ENCODE measurements at regions of chr10 and their contacts with region 1.

Region 1: DNA sequence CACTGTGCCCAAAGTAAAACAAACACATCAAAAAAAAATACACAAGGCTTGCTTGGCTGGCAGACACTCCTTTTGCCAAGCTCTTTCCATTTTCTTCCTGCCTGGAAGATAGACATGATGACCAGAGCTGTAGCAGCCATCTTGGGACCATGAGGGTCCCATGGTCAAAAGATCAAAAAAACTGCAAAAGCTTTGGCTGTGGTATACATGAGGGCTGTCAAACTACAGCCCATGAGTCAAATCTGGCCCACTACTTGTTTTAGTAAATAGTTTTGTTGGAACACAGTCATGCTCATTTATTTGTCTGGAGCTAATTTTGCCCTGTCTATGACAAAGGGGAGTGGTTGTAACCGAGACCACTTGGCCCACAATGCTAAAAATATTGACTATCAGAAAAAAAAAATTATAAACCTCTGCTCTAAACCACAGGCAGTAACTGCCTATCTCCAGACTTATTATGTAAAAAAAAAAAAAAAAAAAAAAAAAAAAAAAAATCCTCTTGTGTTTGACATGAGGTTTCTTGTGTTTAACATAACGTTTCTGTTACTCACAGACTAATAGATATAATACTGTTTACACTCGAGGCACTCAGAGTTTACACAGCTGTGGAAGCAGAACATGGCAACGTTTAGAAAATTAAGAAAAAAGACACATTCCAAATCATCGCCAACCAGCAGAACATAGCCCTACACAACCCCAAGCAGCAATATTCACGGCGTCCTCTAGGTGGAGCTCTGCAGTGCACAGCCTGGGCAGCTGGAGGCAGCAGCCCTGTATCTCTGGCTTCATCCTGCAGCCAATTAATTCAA is 36.9 kb downstream of the ASB13 start:
- DNase-seq: peak; percentile 96
- H3K4me3 Mint-ChIP-seq: peak overlapping the region; percentile 31
- H3K27ac Mint-ChIP-seq: peak overlapping the region; percentile 73
- H3K4me1 Mint-ChIP-seq: peaks cover 29% of the 10 kb centered on the region
- H3K27me3 Mint-ChIP-seq: no peaks in the 10 kb centered on the region

Region 2: DNA sequence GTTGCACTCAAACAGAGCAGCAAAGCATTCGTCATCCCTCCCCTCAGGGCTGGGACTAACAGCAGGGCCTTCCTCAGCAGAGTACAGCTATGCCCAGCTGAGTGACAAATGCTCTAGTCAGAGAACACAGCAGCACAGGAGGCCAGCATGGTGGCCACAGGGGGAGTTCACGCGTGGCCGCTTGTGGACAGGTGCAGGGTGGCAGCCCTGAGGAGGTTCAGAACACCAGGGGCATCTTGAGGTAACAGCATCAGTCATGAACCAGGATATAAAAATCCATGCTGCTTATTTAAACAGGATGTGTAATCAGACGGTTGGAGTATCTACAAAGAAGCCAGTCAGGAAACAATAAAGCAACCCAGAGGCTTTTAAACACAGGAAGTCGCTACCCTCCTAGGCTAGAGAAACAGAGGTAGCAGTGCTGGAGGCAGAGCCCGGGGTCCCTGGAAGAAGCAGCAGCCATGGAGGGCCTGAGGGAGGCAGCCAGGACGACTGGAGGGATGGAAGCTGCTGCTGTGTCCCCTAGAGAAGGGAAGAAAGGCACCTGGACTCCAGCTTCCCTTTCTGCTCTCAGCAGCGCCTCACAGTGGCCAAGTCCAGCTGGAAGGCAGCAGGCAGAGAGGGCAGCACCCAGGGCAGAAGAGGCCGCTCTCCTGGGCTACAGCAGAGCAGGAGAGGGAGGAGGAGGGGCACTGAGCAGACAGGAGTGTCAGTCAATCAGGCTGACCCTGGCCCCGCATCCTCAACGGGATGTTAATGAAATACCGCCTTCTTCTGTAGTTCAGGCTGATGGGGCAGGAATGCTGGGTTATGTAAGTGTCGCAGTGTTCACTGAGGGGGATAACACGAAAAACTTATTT is 335.6 kb before region 1 on chr10:
- CTCF ChIA-PET with region 1: no interaction called
- intact Hi-C with region 1: loop called (anchors 1 kb)
- DNase-seq: peak; percentile 92
- H3K4me3 Mint-ChIP-seq: peak overlapping the region; percentile 85
- H3K27ac Mint-ChIP-seq: peak overlapping the region; percentile 96
- H3K4me1 Mint-ChIP-seq: peaks cover 73% of the 10 kb centered on the region
- H3K27me3 Mint-ChIP-seq: no peaks in the 10 kb centered on the region

Region 3: DNA sequence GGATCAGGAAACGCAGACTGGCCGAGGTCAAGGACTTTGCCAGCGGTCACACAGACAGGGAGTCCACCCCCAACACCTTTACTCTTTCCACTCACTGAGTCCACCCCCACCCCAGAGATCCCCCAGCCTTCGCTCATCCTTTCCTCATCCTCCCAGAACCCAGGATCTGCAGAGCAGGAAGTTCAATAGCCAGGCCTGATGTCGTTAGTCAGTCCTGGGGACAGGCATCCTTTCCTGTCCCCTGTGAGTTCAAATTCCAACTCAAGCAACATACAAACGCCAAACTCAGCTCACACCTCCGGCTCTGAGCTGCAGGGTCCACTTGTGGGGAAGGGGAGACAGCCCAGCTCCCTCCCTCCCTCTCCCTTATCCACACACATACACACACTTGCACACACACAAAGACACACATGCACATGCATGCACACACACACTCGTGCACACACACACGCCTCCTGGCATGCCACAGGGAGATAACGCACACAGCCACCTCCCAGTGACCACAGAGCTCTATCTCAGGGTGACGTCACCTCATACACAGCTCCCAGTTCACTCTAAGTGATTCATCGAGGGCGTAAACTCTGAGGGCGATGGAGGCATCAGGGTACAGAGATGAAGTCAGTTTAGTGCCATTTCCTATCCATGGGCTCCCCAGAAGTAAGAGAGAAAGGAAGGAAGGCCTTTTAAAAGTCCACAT is 80.8 kb before region 1 on chr10:
- CTCF ChIA-PET with region 1: interaction called, 3 read pairs
- intact Hi-C with region 1: loop called (anchors 5 kb)
- DNase-seq: peak; percentile 78
- H3K4me3 Mint-ChIP-seq: no peak overlapping the region
- H3K27ac Mint-ChIP-seq: no peak overlapping the region
- H3K4me1 Mint-ChIP-seq: peaks cover 30% of the 10 kb centered on the region
- H3K27me3 Mint-ChIP-seq: no peaks in the 10 kb centered on the region

Region 4: DNA sequence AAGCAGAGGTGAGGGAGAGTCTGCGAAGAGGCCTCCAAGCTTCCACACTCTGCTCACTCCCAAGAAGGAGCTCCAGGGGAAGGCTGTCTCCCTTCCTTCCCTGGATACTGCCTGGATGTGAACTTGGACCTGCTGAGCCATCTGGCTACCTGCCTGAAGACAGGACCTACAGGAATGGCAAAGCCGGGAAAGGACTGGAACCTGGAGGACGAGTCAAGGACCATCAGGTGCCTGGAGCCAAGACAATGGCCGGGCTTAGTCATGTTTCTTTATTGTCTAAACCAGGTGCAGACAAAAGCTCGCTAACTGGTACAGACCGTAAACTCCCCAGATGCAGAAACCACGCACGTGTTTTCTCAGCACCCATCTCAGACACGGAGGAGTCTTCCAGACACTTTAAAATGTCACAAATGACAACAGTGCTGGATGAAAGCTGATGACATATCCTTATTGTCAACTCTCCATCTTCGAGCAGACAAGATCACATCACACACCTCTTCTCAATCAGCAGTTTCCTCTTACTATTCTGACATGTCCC is 24.8 kb after region 1 on chr10:
- CTCF ChIA-PET with region 1: interaction called, 8 read pairs
- intact Hi-C with region 1: loop called (anchors 2 kb)
- DNase-seq: peak; percentile 12
- H3K4me3 Mint-ChIP-seq: no peak overlapping the region
- H3K27ac Mint-ChIP-seq: no peak overlapping the region
- H3K4me1 Mint-ChIP-seq: peaks cover 37% of the 10 kb centered on the region
- H3K27me3 Mint-ChIP-seq: no peaks in the 10 kb centered on the region

Region 5: DNA sequence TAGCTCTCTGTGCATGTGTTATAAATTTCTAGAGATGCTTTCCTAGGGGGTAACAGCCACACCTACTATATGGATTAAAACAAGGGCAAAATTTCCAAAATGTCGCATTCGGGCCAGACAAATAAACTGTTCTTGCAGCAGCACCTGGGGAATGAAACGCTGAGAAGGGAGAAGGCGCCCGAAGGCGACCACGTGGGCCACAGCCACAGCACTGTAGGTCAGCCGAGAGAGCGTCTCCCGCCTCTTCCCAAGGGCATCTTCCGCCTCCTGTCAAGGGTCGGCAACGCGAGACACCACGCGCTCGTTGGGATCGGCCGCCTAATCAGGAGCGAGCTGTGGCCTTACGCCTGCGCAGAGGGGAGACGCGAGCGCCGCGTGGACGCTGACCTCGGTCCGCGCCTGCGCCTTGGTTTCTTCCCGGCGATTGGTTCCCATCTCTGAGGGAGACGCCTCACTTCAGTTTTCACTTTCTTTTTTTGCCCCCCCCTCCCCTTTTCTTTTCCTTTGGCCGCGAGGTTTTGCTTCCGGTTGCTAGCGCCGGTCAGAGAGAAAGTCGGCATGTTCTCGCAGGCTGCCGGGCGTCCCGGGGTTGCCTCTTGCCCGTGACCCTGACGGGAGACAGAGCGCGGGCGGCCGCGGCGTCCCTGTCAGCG is 54.9 kb after region 1 on chr10 and contains the start of gene TASOR2:
- CTCF ChIA-PET with region 1: interaction called, 4 read pairs
- intact Hi-C with region 1: loop called (anchors 1 kb)
- DNase-seq: peak; percentile 98
- H3K4me3 Mint-ChIP-seq: peak within 1 kb of the TSS; percentile 87
- H3K27ac Mint-ChIP-seq: peak within 1 kb of the TSS; percentile 94
- H3K4me1 Mint-ChIP-seq: peaks cover 45% of the 10 kb centered on the region
- H3K27me3 Mint-ChIP-seq: no peaks in the 10 kb centered on the region
- total RNA-seq, gene TASOR2: 36.4 to 37.7 TPM

Region 6: DNA sequence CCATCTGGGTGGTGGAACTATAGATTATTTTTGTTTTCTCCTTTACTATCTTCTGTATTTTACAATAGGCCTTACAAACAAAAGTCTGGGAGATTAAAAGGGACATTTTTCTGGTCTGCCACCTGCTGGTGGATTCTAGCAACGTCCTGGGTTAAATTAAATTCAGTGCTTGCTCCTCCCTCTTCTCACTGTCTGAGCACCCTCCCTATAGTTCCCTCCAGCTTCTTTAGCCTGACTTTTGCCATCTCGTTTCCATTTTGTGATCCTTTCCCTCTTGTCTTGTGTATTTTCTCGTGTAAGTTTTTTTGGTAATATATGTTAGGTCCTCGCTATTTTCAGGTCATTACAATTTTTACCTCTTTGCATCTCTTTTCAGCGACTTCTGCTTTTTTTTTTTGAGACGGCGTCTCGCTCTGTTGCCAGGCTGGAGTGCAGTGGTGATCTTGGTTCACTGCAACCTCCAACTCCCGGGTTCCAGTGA is 244.0 kb after region 1 on chr10:
- CTCF ChIA-PET with region 1: interaction called, 13 read pairs
- intact Hi-C with region 1: loop called (anchors 1 kb)
- DNase-seq: peak; percentile 85
- H3K4me3 Mint-ChIP-seq: peak overlapping the region; percentile 44
- H3K27ac Mint-ChIP-seq: no peak overlapping the region
- H3K4me1 Mint-ChIP-seq: peaks cover 3% of the 10 kb centered on the region
- H3K27me3 Mint-ChIP-seq: no peaks in the 10 kb centered on the region

Region 7: DNA sequence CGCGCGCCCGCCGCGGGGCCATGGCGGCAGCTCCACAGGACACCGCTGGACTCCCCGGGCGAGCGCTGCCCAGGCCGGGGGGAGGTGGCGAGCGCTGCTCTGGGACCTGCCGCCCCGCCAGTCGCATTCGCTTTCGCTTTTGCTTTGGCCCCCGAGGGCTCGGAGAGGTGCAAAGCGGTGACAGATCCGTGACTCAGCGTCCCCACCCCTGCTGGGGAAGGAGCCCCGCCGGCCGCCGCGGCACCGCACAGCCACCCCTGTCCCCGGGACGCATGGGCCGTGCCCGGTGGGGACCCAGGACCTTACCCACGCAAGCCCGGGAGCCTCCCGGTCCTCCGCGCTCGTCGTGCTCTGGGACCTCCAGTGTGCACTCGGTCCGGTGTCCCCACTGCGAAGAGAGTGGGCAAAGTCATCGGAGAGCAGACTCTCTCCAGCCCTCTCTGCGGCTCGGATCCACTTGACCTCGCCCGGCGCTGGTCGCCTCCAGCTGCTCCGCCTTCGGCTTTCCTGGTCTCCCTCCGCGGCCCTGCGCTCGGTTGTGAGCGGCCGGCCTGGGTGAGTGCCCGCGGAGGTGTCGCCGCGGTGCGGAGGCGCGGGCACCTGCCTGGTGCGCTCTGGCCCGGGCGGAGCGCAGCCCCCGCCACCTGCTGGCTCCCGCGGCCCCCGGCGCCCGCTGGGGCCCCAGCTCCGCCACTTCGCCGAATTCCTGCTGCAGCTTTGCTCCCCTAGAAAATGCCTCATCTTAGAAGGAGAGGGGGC is 348.1 kb after region 1 on chr10 and contains the start of gene IL15RA:
- CTCF ChIA-PET with region 1: no interaction called
- intact Hi-C with region 1: loop called (anchors 5 kb)
- DNase-seq: peak; percentile 91
- H3K4me3 Mint-ChIP-seq: peak within 1 kb of the TSS; percentile 97
- H3K27ac Mint-ChIP-seq: peak within 1 kb of the TSS; percentile 97
- H3K4me1 Mint-ChIP-seq: peaks cover 24% of the 10 kb centered on the region
- H3K27me3 Mint-ChIP-seq: no peaks in the 10 kb centered on the region
- total RNA-seq, gene IL15RA: 14.7 to 16.3 TPM